Heart right ventricle (tissue), 16 donors: ENCODE measurements at regions of chr7 and their contacts with region 1.

Region 1: DNA sequence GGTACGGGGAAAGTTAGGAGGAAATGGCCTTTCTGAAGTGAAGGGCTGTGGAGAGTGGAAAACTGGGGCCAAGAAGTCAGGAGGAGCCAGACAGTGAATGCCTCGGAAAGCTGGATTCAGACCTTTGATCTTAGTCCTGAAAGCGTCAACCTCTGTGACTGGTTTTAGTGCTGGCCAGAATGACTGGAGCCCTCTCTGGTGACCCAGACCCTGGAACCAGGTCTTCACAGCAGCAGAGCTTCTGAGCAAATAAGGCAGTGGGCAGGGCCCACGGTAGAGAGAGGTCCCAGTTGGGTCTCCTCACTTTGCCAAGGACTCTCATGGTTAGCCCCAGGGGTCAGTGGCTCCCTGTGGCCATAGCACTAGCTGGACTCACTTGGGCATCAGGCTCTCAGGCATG is 157.7 kb upstream of the EEPD1 start:
- DNase-seq: no peak
- ATAC-seq: no peak
- H3K4me3 ChIP-seq: no peak overlapping the region
- H3K27ac ChIP-seq: no peak overlapping the region
- H3K4me1 ChIP-seq: peaks cover 0 to 15% (median 0%) of the 10 kb centered on the region in 9 donors
- H3K27me3 ChIP-seq: no peaks in the 10 kb centered on the region
- CTCF ChIP-seq: no peak

Region 2: DNA sequence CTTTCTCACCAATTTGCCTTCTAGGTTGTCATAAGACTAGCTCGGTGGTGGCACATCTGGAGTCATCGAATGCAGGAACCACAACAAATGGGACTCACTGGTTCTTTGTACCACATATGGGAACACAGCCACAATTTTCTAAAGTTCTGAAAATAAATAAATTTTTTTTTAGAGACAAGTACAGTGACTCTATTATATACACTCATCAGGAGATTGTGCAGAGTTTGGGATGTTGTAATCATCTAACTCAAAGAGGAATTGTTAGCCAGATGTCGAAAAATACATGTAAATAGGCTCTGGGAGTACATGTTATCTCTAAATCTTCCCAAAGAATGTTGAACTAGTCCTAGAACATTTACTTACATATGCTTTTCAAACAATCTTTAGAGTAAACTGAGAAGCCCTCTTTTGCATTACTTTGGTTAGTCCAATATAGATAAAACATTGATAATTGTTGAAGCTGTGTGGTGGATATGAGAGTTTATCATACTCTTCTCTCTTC is 214.1 kb before region 1 on chr7:
- intact Hi-C with region 1: no loop called
- DNase-seq: no peak
- ATAC-seq: no peak
- H3K4me3 ChIP-seq: no peak overlapping the region
- H3K27ac ChIP-seq: no peak overlapping the region
- H3K4me1 ChIP-seq: peaks cover 0 to 8% (median 0%) of the 10 kb centered on the region in 9 donors
- H3K27me3 ChIP-seq: no peaks in the 10 kb centered on the region
- CTCF ChIP-seq: no peak

Region 3: GRCh38 chr7:36037121-36037662 is 41.9 kb after region 1 on chr7:
- intact Hi-C with region 1: loop called in 1 of 10 experiments (anchors 5 kb)
- DNase-seq: peak; percentile 52 to 82
- ATAC-seq: peak; percentile 62 to 93 (median 85)
- H3K4me3 ChIP-seq: peak overlapping the region in 1 of 10 donors; percentile 1
- H3K27ac ChIP-seq: peak overlapping the region; percentile 48 to 91 (median 83)
- H3K4me1 ChIP-seq: peaks cover 6 to 65% (median 44%) of the 10 kb centered on the region in 9 donors
- H3K27me3 ChIP-seq: no peaks in the 10 kb centered on the region
- CTCF ChIP-seq: peak in 2 of 9 donors; percentile 12

Region 4: DNA sequence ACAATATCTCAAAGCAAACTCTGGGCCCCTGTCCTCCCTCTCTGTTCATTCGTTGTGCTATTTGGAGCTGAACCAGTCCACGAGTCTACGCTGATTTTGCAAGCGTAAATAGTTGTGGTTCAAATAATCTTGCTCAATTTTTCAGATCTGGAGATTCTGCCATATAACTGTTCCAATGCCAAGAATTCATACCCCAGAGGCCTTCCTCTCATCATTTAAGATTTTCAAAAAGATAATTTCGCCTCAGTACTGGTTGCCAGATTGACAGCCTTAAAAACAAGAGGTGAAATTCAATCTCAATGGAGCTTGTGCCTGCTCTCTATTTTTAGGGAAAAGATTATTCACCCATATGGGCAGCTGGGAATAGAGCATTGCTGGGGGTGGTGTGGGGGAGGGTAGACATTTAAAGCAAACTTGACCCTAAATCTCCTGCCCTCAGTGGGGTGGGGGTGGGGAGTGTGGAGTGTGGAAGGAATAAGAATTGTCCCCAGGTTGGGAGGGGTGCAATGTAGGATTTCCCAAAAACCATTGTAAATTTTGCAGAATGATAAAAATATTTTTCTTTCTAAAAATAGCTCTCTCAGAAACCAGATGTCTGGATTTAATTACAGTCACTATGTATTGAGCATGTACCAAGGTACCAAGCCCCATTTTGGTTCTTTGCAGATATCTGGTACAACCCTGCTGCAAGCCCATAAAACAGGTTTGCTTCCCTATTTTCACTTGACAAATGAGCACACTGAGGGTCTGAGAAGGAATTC is 53.0 kb after region 1 on chr7:
- intact Hi-C with region 1: no loop called
- DNase-seq: peak in 1 of 2 donors; percentile 44
- ATAC-seq: peak; percentile 49 to 90 (median 80)
- H3K4me3 ChIP-seq: no peak overlapping the region
- H3K27ac ChIP-seq: peak overlapping the region; percentile 25 to 75 (median 48)
- H3K4me1 ChIP-seq: peaks cover 18 to 67% (median 54%) of the 10 kb centered on the region in 9 donors
- H3K27me3 ChIP-seq: no peaks in the 10 kb centered on the region
- CTCF ChIP-seq: no peak